AG04449 (cell line): ENCODE measurements at regions of chr5 and their contacts with region 1.

Region 1: GRCh38 chr5:17180957-17181723 is 36.3 kb upstream of the BASP1 start:
- DNase-seq: peak; percentile 98
- H3K4me3 ChIP-seq: no peak overlapping the region
- CTCF ChIP-seq: no peak

Region 2: GRCh38 chr5:17105744-17106418 is 75.3 kb before region 1 on chr5:
- CTCF ChIA-PET with region 1: no interaction called
- POLR2A ChIA-PET with region 1: no interaction called
- DNase-seq: no peak
- H3K4me3 ChIP-seq: no peak overlapping the region
- CTCF ChIP-seq: no peak

Region 3: GRCh38 chr5:17147617-17148016 is 33.5 kb before region 1 on chr5:
- CTCF ChIA-PET with region 1: no interaction called
- POLR2A ChIA-PET with region 1: no interaction called
- DNase-seq: no peak
- H3K4me3 ChIP-seq: no peak overlapping the region
- CTCF ChIP-seq: no peak

Region 4: GRCh38 chr5:17157916-17158529 is 23.1 kb before region 1 on chr5:
- CTCF ChIA-PET with region 1: interaction called, 6 read pairs
- POLR2A ChIA-PET with region 1: interaction called, 12 read pairs
- DNase-seq: peak; percentile 100
- H3K4me3 ChIP-seq: no peak overlapping the region
- CTCF ChIP-seq: no peak